K562 (cell line): ENCODE measurements at regions of chr11 and their contacts with region 1.

Region 1: GRCh38 chr11:61899146-61899841 is 7.9 kb upstream of the FADS3 start:
- DNase-seq: peak; percentile 89 to 94 (median 94)
- ATAC-seq: peak; percentile 93
- H3K4me3 ChIP-seq: no peak overlapping the region
- H3K27ac ChIP-seq: no peak overlapping the region
- H3K4me1 ChIP-seq: peaks cover 4 to 34% of the 10 kb centered on the region in 2 experiments; a peak in 4 of 5 replicates
- H3K27me3 ChIP-seq: no peaks in the 10 kb centered on the region
- CTCF ChIP-seq: peak; percentile 99
- EP300 ChIP-seq: no peak
- POLR2A ChIP-seq: no peak
- RAD21 ChIP-seq: peak; percentile 97 to 99

Region 2: GRCh38 chr11:61871158-61871597 is 28.1 kb before region 1 on chr11:
- CTCF ChIA-PET with region 1: no interaction called
- POLR2A ChIA-PET with region 1: no interaction called
- in situ Hi-C with region 1: no loop called
- intact Hi-C with region 1: loop called (anchors 2 kb)
- DNase-seq: peak; percentile 88 to 93 (median 90)
- ATAC-seq: peak; percentile 94
- H3K4me3 ChIP-seq: no peak overlapping the region
- H3K27ac ChIP-seq: peak overlapping the region; percentile 85
- H3K4me1 ChIP-seq: peaks cover 43 to 76% of the 10 kb centered on the region in 2 experiments
- H3K27me3 ChIP-seq: no peaks in the 10 kb centered on the region
- CTCF ChIP-seq: peak; percentile 91 to 97 (median 96)
- EP300 ChIP-seq: no peak
- POLR2A ChIP-seq: no peak
- RAD21 ChIP-seq: peak; percentile 93 to 96

Region 3: DNA sequence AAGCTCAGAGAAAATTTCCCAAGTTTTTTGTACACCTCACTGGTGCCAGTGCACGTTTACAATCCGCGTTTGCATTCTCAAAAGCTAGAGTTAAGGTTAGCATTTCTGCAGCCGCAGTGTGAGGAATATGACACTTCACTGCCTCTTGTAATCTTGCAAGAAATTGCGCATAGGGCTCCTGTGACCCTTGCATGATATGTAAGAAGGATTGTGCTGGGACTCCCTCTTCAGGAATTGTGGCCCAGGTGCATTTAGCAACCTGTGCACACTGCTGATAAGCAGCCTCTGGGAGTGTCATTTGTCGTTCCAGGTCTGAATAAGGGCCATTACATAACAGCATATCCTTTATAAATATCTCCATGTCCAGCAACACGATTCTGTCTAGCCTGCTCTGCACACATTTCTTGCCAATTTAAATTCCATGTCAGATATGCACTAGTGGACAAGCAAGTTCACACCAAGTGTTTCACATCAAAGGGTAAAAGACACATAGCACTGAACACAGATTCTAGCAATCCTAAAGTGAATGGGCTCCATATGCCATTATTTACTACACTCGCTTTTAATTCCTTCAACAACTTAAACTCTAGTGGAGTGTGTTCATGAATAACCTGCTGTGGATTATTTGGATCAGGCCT is 155.3 kb after region 1 on chr11:
- CTCF ChIA-PET with region 1: interaction called, 25 read pairs
- POLR2A ChIA-PET with region 1: interaction called, 3 read pairs
- in situ Hi-C with region 1: no loop called
- intact Hi-C with region 1: loop called (anchors 1 kb)
- DNase-seq: peak in 2 of 4 experiments; percentile 58 to 81
- ATAC-seq: peak; percentile 87
- H3K4me3 ChIP-seq: no peak overlapping the region
- H3K27ac ChIP-seq: no peak overlapping the region
- H3K4me1 ChIP-seq: peaks cover 0 to 9% of the 10 kb centered on the region in 2 experiments; a peak in 2 of 5 replicates
- H3K27me3 ChIP-seq: no peaks in the 10 kb centered on the region
- CTCF ChIP-seq: peak; percentile 70 to 93 (median 73)
- EP300 ChIP-seq: peak; percentile 62
- POLR2A ChIP-seq: no peak
- RAD21 ChIP-seq: peak; percentile 91 to 96

Region 4: GRCh38 chr11:62081378-62082291 is 182.3 kb after region 1 on chr11:
- CTCF ChIA-PET with region 1: interaction called, 61 read pairs
- POLR2A ChIA-PET with region 1: interaction called, 5 read pairs
- in situ Hi-C with region 1: loop called (anchors 5 kb)
- intact Hi-C with region 1: loop called (anchors 1 kb)
- DNase-seq: peak; percentile 75 to 78 (median 76)
- ATAC-seq: peak; percentile 91
- H3K4me3 ChIP-seq: no peak overlapping the region
- H3K27ac ChIP-seq: no peak overlapping the region
- H3K4me1 ChIP-seq: peaks cover 0 to 5% of the 10 kb centered on the region in 2 experiments; a peak in 3 of 5 replicates
- H3K27me3 ChIP-seq: no peaks in the 10 kb centered on the region
- CTCF ChIP-seq: peak; percentile 90 to 97 (median 96)
- EP300 ChIP-seq: no peak
- POLR2A ChIP-seq: no peak
- RAD21 ChIP-seq: peak; percentile 98